K562 (cell line): ENCODE measurements at regions of chr1 and their contacts with region 1.

Region 1: GRCh38 chr1:75233302-75233929 is 99.2 kb downstream of the LHX8 start:
- DNase-seq: peak; percentile 22 to 53 (median 28)
- ATAC-seq: peak; percentile 94
- H3K4me3 ChIP-seq: no peak overlapping the region
- H3K27ac ChIP-seq: no peak overlapping the region
- H3K4me1 ChIP-seq: no peaks in the 10 kb centered on the region
- H3K27me3 ChIP-seq: no peaks in the 10 kb centered on the region
- CTCF ChIP-seq: peak; percentile 44 to 74 (median 66); a peak in 5 of 6 replicates
- EP300 ChIP-seq: no peak
- POLR2A ChIP-seq: no peak
- RAD21 ChIP-seq: peak; percentile 65 to 86

Region 2: GRCh38 chr1:75214017-75214416 is 19.4 kb before region 1 on chr1:
- CTCF ChIA-PET with region 1: no interaction called
- POLR2A ChIA-PET with region 1: no interaction called
- in situ Hi-C with region 1: no loop called
- intact Hi-C with region 1: no loop called
- DNase-seq: no peak
- ATAC-seq: no peak
- H3K4me3 ChIP-seq: no peak overlapping the region
- H3K27ac ChIP-seq: no peak overlapping the region
- H3K4me1 ChIP-seq: no peaks in the 10 kb centered on the region
- H3K27me3 ChIP-seq: no peaks in the 10 kb centered on the region
- CTCF ChIP-seq: 0 out of 6 replicates have a peak, but pooled peaks of 1 of the 3 experiments have one; percentile 7
- EP300 ChIP-seq: no peak
- POLR2A ChIP-seq: no peak
- RAD21 ChIP-seq: no peak; a peak in 1 of 4 replicates

Region 3: DNA sequence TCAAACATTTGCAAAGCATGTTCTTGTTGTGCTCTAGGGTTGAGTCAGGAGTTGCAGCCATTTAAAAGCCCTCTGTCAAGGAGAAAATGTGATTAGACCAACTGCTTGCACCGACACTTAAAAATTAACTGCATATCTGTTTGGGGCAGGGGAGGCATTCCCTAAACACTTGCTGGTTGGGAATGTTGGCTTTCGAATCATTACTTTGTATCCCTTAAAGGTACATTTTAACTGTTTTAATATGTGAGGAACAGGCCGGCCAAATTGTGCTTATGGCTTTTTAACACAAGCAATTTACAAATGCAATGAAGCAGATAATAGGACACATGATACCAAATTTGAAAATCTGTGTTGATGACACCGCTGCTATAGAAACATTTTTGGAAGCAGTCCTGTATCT is 59.9 kb after region 1 on chr1:
- CTCF ChIA-PET with region 1: no interaction called
- POLR2A ChIA-PET with region 1: no interaction called
- in situ Hi-C with region 1: no loop called
- intact Hi-C with region 1: no loop called
- DNase-seq: no peak
- ATAC-seq: no peak
- H3K4me3 ChIP-seq: no peak overlapping the region
- H3K27ac ChIP-seq: no peak overlapping the region
- H3K4me1 ChIP-seq: no peaks in the 10 kb centered on the region
- H3K27me3 ChIP-seq: no peaks in the 10 kb centered on the region
- CTCF ChIP-seq: no peak
- EP300 ChIP-seq: no peak
- POLR2A ChIP-seq: no peak
- RAD21 ChIP-seq: no peak

Region 4: DNA sequence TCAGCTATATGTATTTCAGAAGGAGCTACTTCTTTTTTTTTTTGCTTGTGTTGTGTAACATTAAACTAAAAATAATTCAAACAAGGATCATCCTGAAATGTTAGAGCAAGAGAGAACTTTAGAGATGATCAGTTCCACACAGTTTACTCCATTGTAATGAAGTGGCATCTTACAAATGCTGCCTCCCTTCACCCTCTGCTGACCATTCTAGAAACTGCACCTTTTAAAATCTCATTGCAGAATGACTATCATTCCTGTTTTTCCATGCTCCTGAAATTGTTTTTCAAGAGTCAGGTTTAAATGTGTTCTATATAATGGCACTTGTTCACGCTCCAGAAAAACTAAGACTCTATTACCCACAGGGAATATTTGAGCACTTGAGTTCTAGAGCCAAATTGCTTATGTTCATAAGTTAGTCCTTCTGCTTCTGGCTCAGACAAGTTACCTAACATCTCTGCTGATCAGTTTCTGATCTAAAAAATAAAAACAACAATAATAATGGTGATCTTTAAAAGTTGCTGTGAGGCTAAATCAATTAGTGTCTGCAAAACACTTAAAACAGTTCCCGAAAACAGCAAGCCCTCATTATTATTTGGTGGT is 399.0 kb after region 1 on chr1:
- CTCF ChIA-PET with region 1: interaction called, 9 read pairs
- POLR2A ChIA-PET with region 1: interaction called, 4 read pairs
- in situ Hi-C with region 1: no loop called
- intact Hi-C with region 1: loop called (anchors 1 kb)
- DNase-seq: peak; percentile 34 to 52 (median 44)
- ATAC-seq: peak; percentile 89
- H3K4me3 ChIP-seq: no peak overlapping the region
- H3K27ac ChIP-seq: no peak overlapping the region
- H3K4me1 ChIP-seq: no peaks in the 10 kb centered on the region
- H3K27me3 ChIP-seq: no peaks in the 10 kb centered on the region
- CTCF ChIP-seq: peak; percentile 63 to 77 (median 70); a peak in 5 of 6 replicates
- EP300 ChIP-seq: no peak
- POLR2A ChIP-seq: no peak
- RAD21 ChIP-seq: peak; percentile 87 to 95